CD8-positive, alpha-beta memory T cell (primary cell): ENCODE measurements at regions of chr3 and their contacts with region 1.

Region 1: DNA sequence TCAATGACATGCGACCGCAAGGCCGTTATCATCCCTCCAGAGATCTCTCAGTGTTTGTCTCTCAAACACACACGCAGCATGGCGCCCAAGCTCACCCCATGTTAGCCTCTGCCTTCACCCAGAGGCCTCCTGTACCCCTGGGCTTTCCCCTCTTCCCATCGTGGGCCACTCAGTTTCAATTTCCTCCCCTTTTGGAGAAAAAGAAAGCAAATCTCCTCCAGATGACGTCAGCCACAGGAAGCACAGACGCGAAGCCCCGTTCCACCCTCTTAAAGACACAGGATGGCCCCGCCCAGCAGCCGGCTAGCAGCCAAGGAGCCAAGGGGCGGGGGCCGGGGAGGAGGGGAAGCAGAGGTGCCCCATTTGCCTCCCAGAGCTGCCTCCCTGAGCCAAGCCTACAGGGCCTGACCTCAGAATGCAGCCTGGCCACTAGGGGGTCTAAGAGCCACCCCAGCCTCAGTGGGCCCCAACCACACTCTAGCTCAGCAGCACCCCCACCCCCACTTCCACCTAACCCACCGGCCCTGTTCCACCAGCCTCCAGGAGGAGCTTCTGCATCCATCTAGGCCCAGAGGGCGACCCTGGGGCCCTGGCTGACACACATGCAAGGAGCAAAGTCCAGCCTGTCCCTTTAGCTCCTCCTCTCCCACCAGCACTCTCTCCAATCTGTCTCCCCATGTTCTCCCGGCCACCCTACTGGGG is 26.5 kb downstream of the ATRIP start:
- DNase-seq: peak; percentile 91 to 96 (median 94)
- H3K4me3 ChIP-seq: peak overlapping the region; percentile 98
- H3K4me3 Mint-ChIP-seq: peak overlapping the region; percentile 90 to 96 (median 95)
- H3K27ac ChIP-seq: peak overlapping the region; percentile 99
- H3K27ac Mint-ChIP-seq: peak overlapping the region; percentile 92 to 99 (median 98)
- H3K4me1 ChIP-seq: peaks cover 58% of the 10 kb centered on the region
- H3K4me1 Mint-ChIP-seq: peaks cover 47 to 79% (median 55%) of the 10 kb centered on the region in 3 donors
- H3K27me3 ChIP-seq: no peaks in the 10 kb centered on the region
- H3K27me3 Mint-ChIP-seq: no peaks in the 10 kb centered on the region

Region 2: GRCh38 chr3:48352547-48352946 is 120.5 kb before region 1 on chr3:
- CTCF ChIA-PET with region 1: no interaction called
- POLR2A ChIA-PET with region 1: no interaction called
- DNase-seq: no peak
- H3K4me3 ChIP-seq: no peak overlapping the region
- H3K4me3 Mint-ChIP-seq: no peak overlapping the region
- H3K27ac ChIP-seq: no peak overlapping the region
- H3K27ac Mint-ChIP-seq: no peak overlapping the region
- H3K4me1 ChIP-seq: no peaks in the 10 kb centered on the region
- H3K4me1 Mint-ChIP-seq: no peaks in the 10 kb centered on the region
- H3K27me3 ChIP-seq: no peaks in the 10 kb centered on the region
- H3K27me3 Mint-ChIP-seq: peaks cover 7 to 52% of the 10 kb centered on the region in 2 donors

Region 3: GRCh38 chr3:48446425-48447193 is 26.5 kb before region 1 on chr3 and contains the start of gene ATRIP:
- CTCF ChIA-PET with region 1: interaction called, 7 read pairs
- POLR2A ChIA-PET with region 1: interaction called, 18 read pairs
- DNase-seq: peak; percentile 78 to 89 (median 83)
- H3K4me3 ChIP-seq: peak within 1 kb of the TSS; percentile 88
- H3K4me3 Mint-ChIP-seq: peak within 1 kb of the TSS; percentile 84 to 94 (median 88)
- H3K27ac ChIP-seq: peak within 1 kb of the TSS; percentile 71
- H3K27ac Mint-ChIP-seq: peak within 1 kb of the TSS; percentile 91 to 96 (median 95)
- H3K4me1 ChIP-seq: peaks cover 26% of the 10 kb centered on the region
- H3K4me1 Mint-ChIP-seq: peaks cover 27 to 46% (median 37%) of the 10 kb centered on the region in 3 donors
- H3K27me3 ChIP-seq: no peaks in the 10 kb centered on the region
- H3K27me3 Mint-ChIP-seq: no peaks in the 10 kb centered on the region
- total RNA-seq, gene ATRIP: 22.1 to 22.8 TPM

Region 4: DNA sequence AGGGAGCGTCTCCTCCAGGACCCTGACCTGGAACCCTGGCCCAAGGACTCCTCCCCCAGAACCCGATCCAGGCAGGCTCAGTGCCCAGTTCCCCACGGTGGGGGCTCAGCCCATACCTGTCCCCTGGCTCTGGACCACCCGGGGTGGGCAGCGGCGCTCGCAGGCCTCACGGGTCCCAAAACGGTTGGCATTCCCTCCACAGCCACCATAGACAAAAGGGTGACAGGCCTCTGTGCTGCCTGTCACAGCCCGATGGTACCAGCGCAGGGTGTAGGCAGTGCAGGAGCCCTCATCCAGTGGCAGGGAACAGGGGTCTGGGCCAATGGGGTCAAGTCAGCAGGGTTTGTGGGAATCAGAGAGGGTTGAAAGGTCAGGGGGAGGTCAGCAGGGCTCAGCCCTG is 91.6 kb after region 1 on chr3:
- CTCF ChIA-PET with region 1: no interaction called
- POLR2A ChIA-PET with region 1: no interaction called
- DNase-seq: no peak
- H3K4me3 ChIP-seq: no peak overlapping the region
- H3K4me3 Mint-ChIP-seq: no peak overlapping the region
- H3K27ac ChIP-seq: no peak overlapping the region
- H3K27ac Mint-ChIP-seq: no peak overlapping the region
- H3K4me1 ChIP-seq: no peaks in the 10 kb centered on the region
- H3K4me1 Mint-ChIP-seq: peaks cover 4 to 6% (median 5%) of the 10 kb centered on the region in 3 donors
- H3K27me3 ChIP-seq: no peaks in the 10 kb centered on the region
- H3K27me3 Mint-ChIP-seq: peaks cover 0 to 6% of the 10 kb centered on the region in 2 donors